Motor neuron (in vitro differentiated cells): ENCODE measurements at regions of chr3 and their contacts with region 1.

Region 1: GRCh38 chr3:126389112-126389793 is 5.5 kb upstream of the CFAP100 start:
- ATAC-seq: peak; percentile 96 to 99 (median 98)
- H3K4me3 ChIP-seq: peak overlapping the region in 4 of 5 donors; percentile 7 to 17 (median 12)
- H3K27ac ChIP-seq: peak overlapping the region in 1 of 2 donors; percentile 67
- H3K4me1 ChIP-seq: peaks cover under 1 to 7% of the 10 kb centered on the region in 2 donors

Region 2: GRCh38 chr3:126134219-126134975 is 254.9 kb before region 1 on chr3:
- in situ Hi-C with region 1: loop called in 5 of 9 experiments (anchors 25 kb)
- ATAC-seq: peak; percentile 90 to 98 (median 91)
- H3K4me3 ChIP-seq: no peak overlapping the region
- H3K27ac ChIP-seq: no peak overlapping the region
- H3K4me1 ChIP-seq: peaks cover 7 to 8% of the 10 kb centered on the region in 2 donors

Region 3: DNA sequence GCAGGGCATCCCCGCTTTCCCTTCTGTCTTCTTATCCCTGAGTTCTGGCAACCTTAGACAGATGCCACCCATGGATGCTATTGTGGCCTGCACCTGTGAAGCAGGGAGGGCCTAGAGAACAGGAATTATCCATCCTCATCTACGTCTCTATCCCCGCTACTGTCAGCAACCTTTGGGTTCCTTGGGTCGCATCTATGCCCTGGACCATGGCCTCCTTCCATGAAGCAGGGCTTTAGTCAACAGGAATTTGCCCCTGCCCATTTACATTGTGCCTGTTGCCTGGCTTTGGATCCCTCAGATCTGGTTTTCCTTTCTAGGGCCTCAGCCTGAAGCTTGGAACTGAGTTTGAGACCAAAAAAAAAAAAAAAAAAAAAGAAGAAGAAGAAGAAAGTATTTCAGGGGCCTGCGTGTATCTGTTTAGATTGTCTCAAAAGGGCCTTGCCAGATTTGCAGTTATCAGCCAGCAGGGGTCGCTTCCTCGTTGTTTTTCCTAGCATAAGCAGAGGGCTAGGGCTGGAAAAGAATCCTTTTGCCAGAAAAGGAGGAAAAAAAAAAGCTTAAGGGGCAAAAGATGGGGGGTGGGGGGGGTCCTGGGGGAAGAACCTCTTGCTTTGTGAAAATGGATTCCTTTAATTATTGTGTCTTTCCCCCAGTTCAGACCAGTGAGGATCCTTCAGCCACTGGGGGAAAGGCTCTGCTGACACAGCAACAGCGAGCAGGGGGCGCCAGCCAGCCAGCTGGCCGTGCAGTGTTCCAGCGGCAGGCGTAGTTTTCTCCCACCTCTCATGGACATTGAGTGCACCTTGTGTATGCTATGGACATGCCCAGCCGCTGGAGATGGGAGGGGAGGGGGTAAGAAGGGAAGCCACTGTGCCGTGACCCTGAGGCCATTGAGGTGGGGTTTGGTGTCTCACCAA is 143.2 kb before region 1 on chr3:
- in situ Hi-C with region 1: loop called in 5 of 9 experiments (anchors 5 to 25 kb)
- ATAC-seq: peak; percentile 79 to 97 (median 94)
- H3K4me3 ChIP-seq: no peak overlapping the region
- H3K27ac ChIP-seq: no peak overlapping the region
- H3K4me1 ChIP-seq: no peaks in the 10 kb centered on the region

Region 4: GRCh38 chr3:126259411-126260391 is 129.6 kb before region 1 on chr3:
- in situ Hi-C with region 1: loop called in 1 of 9 experiments (anchors 10 kb)
- ATAC-seq: peak in 2 of 8 experiments; percentile 7 to 72
- H3K4me3 ChIP-seq: no peak overlapping the region
- H3K27ac ChIP-seq: peak overlapping the region; percentile 53 to 66
- H3K4me1 ChIP-seq: peaks cover 17 to 22% of the 10 kb centered on the region in 2 donors

Region 5: GRCh38 chr3:126961191-126961790 is 572.0 kb after region 1 on chr3:
- in situ Hi-C with region 1: no loop called
- ATAC-seq: peak in 3 of 8 experiments; percentile 92 to 95 (median 93)
- H3K4me3 ChIP-seq: no peak overlapping the region
- H3K27ac ChIP-seq: no peak overlapping the region
- H3K4me1 ChIP-seq: peaks cover 8 to 16% of the 10 kb centered on the region in 2 donors